Upper lobe of right lung (tissue), 1 donor: ENCODE measurements at regions of chr19 and their contacts with region 1.

Region 1: GRCh38 chr19:54029930-54030490 is 33.7 kb downstream of the VSTM1 start:
- DNase-seq: no peak
- ATAC-seq: peak; percentile 86
- H3K4me3 ChIP-seq: no peak overlapping the region
- H3K27ac ChIP-seq: no peak overlapping the region
- H3K4me1 ChIP-seq: no peaks in the 10 kb centered on the region
- H3K27me3 ChIP-seq: peaks cover under 1% of the 10 kb centered on the region
- CTCF ChIP-seq: peak; percentile 64

Region 2: GRCh38 chr19:53906211-53907192 is 123.5 kb before region 1 on chr19:
- intact Hi-C with region 1: loop called (anchors 10 kb)
- DNase-seq: peak; percentile 80
- ATAC-seq: peak; percentile 79
- H3K4me3 ChIP-seq: no peak overlapping the region
- H3K27ac ChIP-seq: no peak overlapping the region
- H3K4me1 ChIP-seq: no peaks in the 10 kb centered on the region
- H3K27me3 ChIP-seq: peaks cover 51% of the 10 kb centered on the region
- CTCF ChIP-seq: peak; percentile 77